Right cardiac atrium (tissue), 5 donors: ENCODE measurements at regions of chr1 and their contacts with region 1.

Region 1: DNA sequence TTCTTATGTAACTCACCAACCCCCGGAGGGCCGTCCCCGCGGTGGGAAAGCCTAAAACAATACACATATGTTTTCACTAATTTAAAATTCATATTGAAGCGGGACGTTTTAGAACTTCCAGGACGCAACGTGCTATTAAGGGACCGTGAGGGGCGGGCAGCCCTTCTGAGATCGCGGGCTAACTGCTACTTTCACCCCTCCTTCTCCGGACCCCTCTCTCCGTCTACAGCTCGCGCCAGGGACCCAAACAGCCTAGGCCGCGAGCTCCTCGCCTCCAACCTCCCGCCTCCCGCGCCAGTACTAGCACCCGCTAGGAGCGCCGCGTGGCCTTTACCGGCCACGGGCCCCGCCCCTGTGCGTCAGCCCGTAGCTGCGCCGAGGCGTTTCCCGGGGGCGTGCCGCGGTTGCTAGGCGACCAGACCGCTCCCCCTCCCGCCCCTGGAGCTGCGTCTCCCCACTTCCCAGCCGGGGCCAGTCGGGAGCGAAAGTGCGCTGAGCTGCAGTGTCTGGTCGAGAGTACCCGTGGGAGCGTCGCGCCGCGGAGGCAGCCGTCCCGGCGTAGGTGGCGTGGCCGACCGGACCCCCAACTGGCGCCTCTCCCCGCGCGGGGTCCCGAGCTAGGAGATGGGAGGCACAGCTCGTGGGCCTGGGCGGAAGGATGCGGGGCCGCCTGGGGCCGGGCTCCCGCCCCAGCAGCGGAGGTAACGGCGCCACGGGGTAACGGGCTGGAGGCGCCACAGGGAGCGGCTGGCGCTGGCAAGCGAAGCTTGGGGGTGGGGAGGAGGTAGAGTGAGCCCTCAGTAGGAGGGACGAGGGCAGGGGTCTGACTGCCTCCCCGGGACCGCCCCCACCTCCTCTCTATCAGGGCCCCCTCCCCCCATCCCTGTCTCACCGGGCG is at the start of gene DYRK3:
- DNase-seq: peak; percentile 98
- ATAC-seq: peak; percentile 99
- H3K4me3 ChIP-seq: peak within 1 kb of the TSS; percentile 67
- H3K27ac ChIP-seq: peak within 1 kb of the TSS; percentile 68
- H3K4me1 ChIP-seq: peaks cover 2% of the 10 kb centered on the region
- H3K27me3 ChIP-seq: no peaks in the 10 kb centered on the region
- total RNA-seq, gene DYRK3: 15.7 to 29.8 (median 23.4) TPM

Region 2: GRCh38 chr1:206583707-206584648 is 51.4 kb before region 1 on chr1:
- intact Hi-C with region 1: no loop called
- DNase-seq: peak; percentile 77 to 91 (median 87)
- ATAC-seq: peak; percentile 64 to 66
- H3K4me3 ChIP-seq: no peak overlapping the region
- H3K27ac ChIP-seq: no peak overlapping the region
- H3K4me1 ChIP-seq: no peaks in the 10 kb centered on the region
- H3K27me3 ChIP-seq: no peaks in the 10 kb centered on the region

Region 3: GRCh38 chr1:206600527-206600926 is 34.8 kb before region 1 on chr1:
- intact Hi-C with region 1: no loop called
- DNase-seq: no peak
- ATAC-seq: no peak
- H3K4me3 ChIP-seq: no peak overlapping the region
- H3K27ac ChIP-seq: no peak overlapping the region
- H3K4me1 ChIP-seq: no peaks in the 10 kb centered on the region
- H3K27me3 ChIP-seq: no peaks in the 10 kb centered on the region

Region 4: GRCh38 chr1:206663832-206664652 is 28.7 kb after region 1 on chr1:
- intact Hi-C with region 1: loop called in 2 of 4 experiments (anchors 2 kb)
- DNase-seq: peak; percentile 37 to 83 (median 82)
- ATAC-seq: peak; percentile 71 to 76
- H3K4me3 ChIP-seq: no peak overlapping the region
- H3K27ac ChIP-seq: peak overlapping the region; percentile 100
- H3K4me1 ChIP-seq: peaks cover 19% of the 10 kb centered on the region
- H3K27me3 ChIP-seq: no peaks in the 10 kb centered on the region

Region 5: GRCh38 chr1:206693029-206693428 is 57.7 kb after region 1 on chr1:
- intact Hi-C with region 1: no loop called
- DNase-seq: peak; percentile 83 to 93 (median 92)
- ATAC-seq: peak; percentile 82 to 83
- H3K4me3 ChIP-seq: no peak overlapping the region
- H3K27ac ChIP-seq: peak overlapping the region; percentile 100
- H3K4me1 ChIP-seq: peaks cover 72% of the 10 kb centered on the region
- H3K27me3 ChIP-seq: no peaks in the 10 kb centered on the region

Region 6: DNA sequence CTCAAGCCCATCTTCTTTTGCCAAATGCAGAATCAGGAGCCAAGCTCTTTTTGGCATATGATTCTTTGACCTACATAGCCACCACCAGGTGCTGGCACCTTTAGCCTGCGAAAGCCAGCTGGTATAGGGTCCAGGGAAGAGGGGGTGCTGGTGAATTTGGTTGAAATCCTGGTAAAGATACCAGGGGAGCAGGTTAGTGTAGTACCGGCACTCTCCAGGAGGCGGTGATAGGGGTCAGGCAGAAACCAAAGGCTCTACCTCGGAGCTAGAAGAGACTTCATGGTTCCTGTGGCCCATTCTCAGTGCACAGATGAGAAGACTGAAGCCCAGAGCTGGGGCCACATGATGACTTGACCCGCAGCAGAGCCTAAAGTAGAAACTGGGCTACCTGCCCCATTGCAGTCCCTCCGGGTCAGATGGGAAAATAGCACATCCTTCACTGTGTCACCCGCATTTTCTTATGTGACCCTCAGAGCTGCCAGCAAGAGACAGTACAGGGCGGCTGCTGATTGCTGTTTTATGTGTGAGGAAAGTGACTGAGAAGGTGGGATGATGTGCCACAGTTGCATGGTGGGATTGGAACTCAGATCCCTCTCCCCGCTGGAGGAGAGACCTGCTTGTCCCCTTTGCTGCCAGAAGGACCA is 99.3 kb after region 1 on chr1:
- intact Hi-C with region 1: loop called in 1 of 4 experiments (anchors 10 kb)
- DNase-seq: peak; percentile 41 to 82 (median 76)
- ATAC-seq: peak; percentile 30 to 31
- H3K4me3 ChIP-seq: no peak overlapping the region
- H3K27ac ChIP-seq: peak overlapping the region; percentile 18
- H3K4me1 ChIP-seq: peaks cover 25% of the 10 kb centered on the region
- H3K27me3 ChIP-seq: no peaks in the 10 kb centered on the region

Region 7: DNA sequence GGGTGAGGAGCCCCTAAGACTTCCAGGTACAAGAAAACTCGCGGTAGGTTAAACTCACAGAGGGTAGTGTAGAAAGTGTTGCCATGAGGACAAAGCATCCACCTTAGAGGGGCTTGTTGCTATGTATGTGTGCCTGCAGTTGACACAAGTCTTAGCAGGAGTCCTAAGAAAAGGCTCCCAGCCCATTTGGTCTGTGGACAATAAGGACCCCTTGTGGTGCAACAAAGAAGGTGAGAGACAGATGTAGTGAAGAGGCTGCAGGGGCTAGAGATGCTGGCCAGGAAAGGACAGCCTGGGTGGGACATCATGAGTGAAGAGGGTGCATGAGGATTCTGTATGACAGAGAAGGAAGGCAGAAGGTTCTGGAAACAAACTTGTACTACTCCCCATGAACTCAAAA is 173.3 kb after region 1 on chr1:
- intact Hi-C with region 1: loop called (anchors 5 kb)
- DNase-seq: no peak
- ATAC-seq: peak; percentile 63 to 71
- H3K4me3 ChIP-seq: no peak overlapping the region
- H3K27ac ChIP-seq: no peak overlapping the region
- H3K4me1 ChIP-seq: no peaks in the 10 kb centered on the region
- H3K27me3 ChIP-seq: no peaks in the 10 kb centered on the region

Region 8: GRCh38 chr1:206982216-206982615 is 346.9 kb after region 1 on chr1:
- intact Hi-C with region 1: loop called in 1 of 4 experiments (anchors 10 kb)
- DNase-seq: peak; percentile 27 to 61 (median 58)
- ATAC-seq: peak; percentile 78 to 80
- H3K4me3 ChIP-seq: no peak overlapping the region
- H3K27ac ChIP-seq: no peak overlapping the region
- H3K4me1 ChIP-seq: no peaks in the 10 kb centered on the region
- H3K27me3 ChIP-seq: no peaks in the 10 kb centered on the region